BJ (cell line): ENCODE measurements at regions of chr11 and their contacts with region 1.

Region 1: DNA sequence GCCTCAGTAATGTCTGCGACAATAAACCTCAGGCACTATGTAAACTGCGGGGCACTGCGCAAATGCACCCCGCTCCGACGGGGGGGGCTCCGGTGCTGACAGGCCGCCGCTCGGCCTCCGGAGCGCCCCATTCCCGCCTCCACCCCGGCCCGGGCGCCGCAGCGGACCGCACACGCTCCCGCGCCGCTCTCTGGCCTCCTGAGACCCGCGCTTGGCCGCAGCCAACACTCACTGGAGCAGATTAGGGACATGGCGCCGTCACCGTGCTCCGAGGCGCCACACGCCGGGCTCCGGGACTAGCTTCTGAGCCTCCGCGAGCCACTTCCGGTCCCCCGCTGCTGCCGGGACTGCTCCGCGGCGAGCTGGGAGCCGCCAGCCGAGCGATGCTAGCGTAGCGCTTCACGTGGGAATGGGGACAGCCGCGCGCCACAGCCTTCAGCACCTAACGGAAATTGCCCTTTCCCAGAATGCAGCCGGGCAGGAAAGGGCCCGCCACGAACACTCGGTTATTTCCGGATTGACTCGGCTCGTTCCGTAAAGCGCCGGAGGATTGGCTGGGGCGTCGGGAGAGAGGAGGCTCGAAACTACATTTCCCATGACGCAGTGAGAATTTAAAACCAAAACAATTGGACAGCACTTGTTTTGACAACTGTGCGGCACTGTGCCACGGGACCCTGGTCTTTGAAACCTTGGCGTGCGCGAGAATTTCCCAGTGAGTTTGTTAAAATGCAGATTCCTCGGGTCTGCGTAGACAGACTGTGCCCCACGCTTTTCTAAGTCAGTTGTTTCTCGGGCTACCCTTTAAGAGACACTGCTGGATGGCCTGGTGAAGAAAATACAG is at the start of gene PRPF19:
- DNase-seq: peak; percentile 80
- H3K4me3 ChIP-seq: peak within 1 kb of the TSS; percentile 75
- H3K27me3 ChIP-seq: 0 out of 2 replicates have a peak, but pooled peaks cover 3% of the 10 kb centered on the region
- CTCF ChIP-seq: no peak
- polyA plus RNA-seq, gene PRPF19: 17.6 and 48.6 TPM in 2 replicates

Region 2: DNA sequence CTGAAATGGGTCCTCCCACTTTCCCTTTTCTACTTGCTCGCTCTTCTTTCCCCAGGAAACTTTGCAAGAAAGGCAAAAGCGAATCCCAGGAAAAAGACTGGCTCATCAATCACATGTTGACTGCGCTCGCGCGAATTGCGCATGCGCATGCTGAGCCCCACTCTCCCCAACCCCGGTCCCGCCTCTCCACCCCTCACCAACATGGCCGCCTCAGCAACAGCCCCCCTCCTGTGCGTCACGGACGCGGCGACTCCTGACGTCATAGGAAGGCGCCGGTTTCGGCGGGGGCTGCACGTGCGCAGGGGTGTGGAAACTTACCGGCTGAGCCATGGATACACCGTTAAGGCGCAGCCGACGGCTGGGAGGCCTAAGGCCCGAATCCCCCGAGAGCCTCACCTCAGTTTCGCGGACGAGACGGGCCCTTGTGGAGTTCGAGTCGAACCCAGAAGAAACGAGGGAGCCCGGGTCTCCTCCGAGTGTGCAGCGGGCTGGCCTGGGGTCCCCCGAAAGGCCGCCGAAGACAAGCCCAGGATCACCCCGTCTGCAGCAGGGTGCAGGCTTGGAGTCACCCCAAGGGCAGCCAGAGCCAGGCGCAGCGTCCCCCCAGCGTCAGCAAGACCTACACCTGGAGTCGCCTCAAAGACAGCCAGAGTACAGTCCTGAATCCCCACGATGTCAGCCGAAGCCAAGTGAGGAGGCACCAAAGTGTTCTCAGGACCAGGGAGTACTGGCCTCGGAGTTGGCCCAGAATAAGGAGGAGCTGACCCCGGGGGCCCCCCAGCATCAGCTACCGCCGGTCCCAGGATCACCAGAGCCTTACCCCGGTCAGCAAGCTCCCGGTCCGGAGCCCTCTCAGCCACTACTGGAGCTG is 64.3 kb before region 1 on chr11 and contains the start of gene CCDC86:
- CTCF ChIA-PET with region 1: interaction called, 716 read pairs
- POLR2A ChIA-PET with region 1: no interaction called
- DNase-seq: peak; percentile 62
- H3K4me3 ChIP-seq: peak within 1 kb of the TSS; percentile 94
- H3K27me3 ChIP-seq: peaks cover 6% of the 10 kb centered on the region; the same call in 1 of the 2 replicates
- CTCF ChIP-seq: no peak
- polyA plus RNA-seq, gene CCDC86: 12.5 and 21.2 TPM in 2 replicates